H1 (cell line): ENCODE measurements at regions of chr2 and their contacts with region 1.

Region 1: DNA sequence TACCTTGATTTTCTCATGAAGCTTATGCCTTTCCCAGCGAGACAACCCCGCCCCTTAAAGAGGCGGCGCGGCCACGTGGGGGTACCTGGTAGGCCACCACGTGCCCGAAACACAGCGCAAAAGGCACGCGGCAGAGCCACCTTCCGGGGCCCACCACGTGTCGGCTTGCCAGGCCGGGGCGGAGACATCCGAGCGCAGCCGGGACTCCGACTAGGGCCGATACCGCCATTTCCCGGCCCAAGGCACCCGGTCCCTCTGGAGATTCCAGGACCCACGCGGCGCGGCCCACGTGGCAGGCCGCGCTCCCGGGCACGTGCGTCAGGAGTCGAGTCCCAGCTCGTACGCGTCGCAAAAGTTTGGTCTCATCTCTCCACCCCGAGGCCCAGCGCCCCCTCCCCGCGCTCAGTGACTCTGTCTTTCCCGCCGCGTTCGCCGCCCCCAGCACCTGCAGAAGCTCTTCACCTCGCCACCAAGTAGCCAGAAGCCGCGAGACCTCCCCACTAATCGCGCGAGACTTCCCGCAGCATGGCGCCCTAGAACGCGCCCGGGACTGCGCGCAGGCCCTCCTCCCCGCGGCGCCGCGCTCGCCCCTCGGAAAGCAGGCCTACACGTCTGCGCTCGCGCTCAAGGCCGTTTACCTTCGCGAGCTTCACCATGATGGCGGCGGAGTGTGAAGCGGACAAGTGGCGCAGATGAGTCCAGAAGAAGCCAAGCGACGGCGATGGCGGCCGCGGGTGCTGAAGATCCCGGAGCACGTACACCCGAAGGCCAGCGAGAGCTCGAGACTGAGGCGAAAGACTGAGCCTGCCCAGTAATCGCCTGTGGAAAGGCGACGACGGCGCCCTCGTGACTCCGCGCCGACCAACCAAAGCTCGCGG is at the start of gene NCL:
- DNase-seq: no peak
- H3K4me3 ChIP-seq: peak within 1 kb of the TSS; percentile 85 to 97 (median 94)
- H3K27ac ChIP-seq: peak within 1 kb of the TSS; percentile 99
- H3K4me1 ChIP-seq: peaks cover 0 to 20% (median 6%) of the 10 kb centered on the region in 4 experiments; a peak in 6 of 7 replicates
- H3K27me3 ChIP-seq: no peaks in the 10 kb centered on the region
- CTCF ChIP-seq: no peak
- EP300 ChIP-seq: no peak
- POLR2A ChIP-seq: peak; percentile 98 to 99
- RAD21 ChIP-seq: no peak
- total RNA-seq, gene NCL: 1,442 and 1,478 TPM in 2 replicates

Region 2: DNA sequence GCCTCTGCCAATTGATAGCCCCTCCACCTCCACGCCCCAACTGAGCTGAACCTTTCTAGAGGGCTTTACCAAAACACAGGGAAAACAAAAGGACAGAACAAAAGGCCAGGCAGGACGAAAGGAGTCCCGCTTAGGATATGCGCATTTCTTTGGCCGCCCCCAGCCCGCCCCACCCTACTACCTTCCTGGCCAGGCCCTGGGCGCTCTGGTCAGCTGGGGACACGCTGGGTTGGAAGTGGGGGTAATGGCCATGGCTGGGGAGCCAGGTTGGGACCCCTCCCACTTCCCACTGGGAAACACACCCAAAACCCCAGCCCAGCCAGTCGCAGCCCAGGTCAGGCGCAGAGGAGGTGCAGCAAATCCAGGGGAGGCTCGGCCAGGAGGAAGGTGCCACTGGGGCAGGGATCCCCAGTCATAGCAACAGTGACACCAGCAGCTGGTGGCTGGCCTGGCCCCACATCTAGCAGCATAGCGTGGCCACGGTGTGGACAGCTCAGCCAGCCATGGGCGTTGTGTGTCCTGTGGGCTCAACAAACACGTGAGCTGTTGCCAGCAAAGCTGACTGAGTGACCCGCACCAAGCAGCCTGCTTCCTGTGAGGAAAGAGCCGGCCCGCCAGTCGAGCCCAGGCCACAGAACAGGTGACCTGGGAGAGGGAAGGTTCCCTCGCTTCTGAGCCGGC is 93.0 kb before region 1 on chr2:
- CTCF ChIA-PET with region 1: no interaction called
- POLR2A ChIA-PET with region 1: interaction called, 11 read pairs
- DNase-seq: peak in 1 of 2 experiments; percentile 80
- H3K4me3 ChIP-seq: peak overlapping the region in 1 of 4 experiments; percentile 42; a peak in 2 of 8 replicates
- H3K27ac ChIP-seq: peak overlapping the region; percentile 86
- H3K4me1 ChIP-seq: peaks cover 0 to 33% (median 26%) of the 10 kb centered on the region in 4 experiments; a peak in 6 of 7 replicates
- H3K27me3 ChIP-seq: no peaks in the 10 kb centered on the region; a peak in 2 of 7 replicates
- CTCF ChIP-seq: no peak
- EP300 ChIP-seq: peak in 1 of 2 experiments; percentile 53; a peak in 1 of 3 replicates
- POLR2A ChIP-seq: peak in 1 of 2 experiments; percentile 68; a peak in 1 of 3 replicates
- RAD21 ChIP-seq: no peak

Region 3: DNA sequence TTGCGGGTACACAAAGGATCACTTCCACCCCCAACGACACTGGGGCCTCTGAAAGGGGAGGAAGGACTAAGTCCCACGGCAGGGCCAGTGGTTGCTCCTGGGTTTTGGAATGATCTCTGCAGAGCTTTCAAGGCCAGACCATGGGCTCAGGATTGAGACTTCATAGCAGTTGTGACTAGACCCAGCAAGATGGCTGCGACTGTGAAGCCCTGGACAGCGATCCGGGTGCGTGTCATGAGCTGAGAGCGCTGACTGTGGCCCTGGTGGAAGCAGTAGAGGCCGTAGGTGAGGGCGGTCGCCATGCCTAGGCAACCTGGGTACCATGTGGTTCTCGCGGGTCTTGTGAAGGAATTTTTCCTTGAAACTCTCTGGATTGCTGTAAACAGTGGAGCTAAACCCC is 27.0 kb before region 1 on chr2:
- CTCF ChIA-PET with region 1: no interaction called
- POLR2A ChIA-PET with region 1: interaction called, 97 read pairs
- DNase-seq: no peak
- H3K4me3 ChIP-seq: no peak overlapping the region
- H3K27ac ChIP-seq: no peak overlapping the region
- H3K4me1 ChIP-seq: no peaks in the 10 kb centered on the region
- H3K27me3 ChIP-seq: no peaks in the 10 kb centered on the region
- CTCF ChIP-seq: no peak
- EP300 ChIP-seq: no peak
- POLR2A ChIP-seq: no peak
- RAD21 ChIP-seq: no peak

Region 4: DNA sequence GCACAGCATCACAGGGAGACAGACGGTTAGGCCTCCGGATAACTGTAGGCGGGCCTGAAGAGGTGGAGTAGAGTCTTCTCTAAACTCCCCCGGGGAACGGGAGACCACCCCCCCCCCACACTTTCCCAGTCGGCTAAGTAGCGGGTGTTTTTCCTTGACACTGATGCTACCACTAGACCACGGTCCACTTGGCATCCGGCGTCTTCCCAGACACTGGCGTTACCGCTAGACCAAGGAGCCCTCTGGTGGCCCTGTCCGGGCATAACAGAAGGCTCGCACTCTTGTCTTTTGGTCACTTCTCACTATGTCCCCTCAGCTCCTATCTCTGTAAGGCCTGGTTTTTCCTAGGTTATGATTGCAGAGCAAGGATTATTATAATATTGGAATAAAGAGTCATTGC is 26.1 kb after region 1 on chr2:
- CTCF ChIA-PET with region 1: interaction called, 11 read pairs
- POLR2A ChIA-PET with region 1: interaction called, 364 read pairs
- DNase-seq: peak in 1 of 2 experiments; percentile 82
- H3K4me3 ChIP-seq: no peak overlapping the region
- H3K27ac ChIP-seq: no peak overlapping the region
- H3K4me1 ChIP-seq: no peaks in the 10 kb centered on the region
- H3K27me3 ChIP-seq: no peaks in the 10 kb centered on the region
- CTCF ChIP-seq: peak; percentile 56 to 60 (median 58)
- EP300 ChIP-seq: no peak
- POLR2A ChIP-seq: no peak
- RAD21 ChIP-seq: peak; percentile 58 to 67

Region 5: DNA sequence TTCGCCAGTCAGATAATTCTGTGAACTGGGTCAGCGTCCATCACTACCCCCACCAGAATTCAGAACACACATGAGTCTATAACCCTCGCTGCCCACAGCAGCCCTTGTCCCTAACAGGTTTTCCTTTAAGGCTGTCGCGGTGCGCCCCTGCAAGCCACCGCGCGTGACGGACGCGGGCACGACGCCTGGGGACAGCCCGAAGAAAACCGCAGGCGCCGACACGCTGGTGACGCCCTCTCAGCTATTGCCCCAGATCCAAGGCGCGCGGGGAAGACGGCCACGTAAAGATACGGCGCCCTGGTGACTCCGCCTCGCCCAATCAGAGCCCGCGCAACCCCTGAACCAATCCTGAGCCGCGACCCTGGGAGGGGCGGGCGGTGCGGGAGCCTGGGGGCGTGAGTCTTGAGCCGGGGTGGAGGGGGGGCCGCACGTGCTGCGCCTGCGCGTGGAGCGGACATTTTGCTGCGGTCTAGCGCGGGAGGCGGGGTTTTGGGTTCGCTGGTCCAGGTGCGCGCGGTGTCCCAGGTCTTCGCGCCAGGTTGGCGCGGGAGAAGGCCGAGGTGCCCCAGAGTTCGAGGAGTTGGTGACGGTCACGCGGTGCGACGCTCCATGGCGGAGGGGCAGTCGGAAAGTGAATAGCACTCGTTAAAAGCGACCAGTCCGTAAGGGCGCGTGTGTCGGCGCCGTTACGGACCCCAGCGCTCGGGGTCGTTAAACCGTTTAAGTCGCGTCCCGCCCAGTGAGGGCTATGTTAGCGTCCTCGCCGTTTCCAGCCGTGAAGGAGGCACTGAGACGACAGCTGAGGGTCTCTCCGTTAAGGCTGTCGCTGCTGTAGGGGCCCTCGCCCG is 50.4 kb after region 1 on chr2:
- CTCF ChIA-PET with region 1: interaction called, 4 read pairs
- POLR2A ChIA-PET with region 1: interaction called, 54 read pairs
- DNase-seq: peak; percentile 93 to 98
- H3K4me3 ChIP-seq: peak overlapping the region; percentile 82 to 93 (median 88)
- H3K27ac ChIP-seq: peak overlapping the region; percentile 88
- H3K4me1 ChIP-seq: peaks cover 0 to 8% (median 5%) of the 10 kb centered on the region in 4 experiments; a peak in 4 of 7 replicates
- H3K27me3 ChIP-seq: no peaks in the 10 kb centered on the region
- CTCF ChIP-seq: no peak
- EP300 ChIP-seq: no peak
- POLR2A ChIP-seq: peak; percentile 93 to 97
- RAD21 ChIP-seq: no peak